Dorsolateral prefrontal cortex (tissue), 120 donors: ENCODE measurements at regions of chr5 and their contacts with region 1.

Region 1: DNA sequence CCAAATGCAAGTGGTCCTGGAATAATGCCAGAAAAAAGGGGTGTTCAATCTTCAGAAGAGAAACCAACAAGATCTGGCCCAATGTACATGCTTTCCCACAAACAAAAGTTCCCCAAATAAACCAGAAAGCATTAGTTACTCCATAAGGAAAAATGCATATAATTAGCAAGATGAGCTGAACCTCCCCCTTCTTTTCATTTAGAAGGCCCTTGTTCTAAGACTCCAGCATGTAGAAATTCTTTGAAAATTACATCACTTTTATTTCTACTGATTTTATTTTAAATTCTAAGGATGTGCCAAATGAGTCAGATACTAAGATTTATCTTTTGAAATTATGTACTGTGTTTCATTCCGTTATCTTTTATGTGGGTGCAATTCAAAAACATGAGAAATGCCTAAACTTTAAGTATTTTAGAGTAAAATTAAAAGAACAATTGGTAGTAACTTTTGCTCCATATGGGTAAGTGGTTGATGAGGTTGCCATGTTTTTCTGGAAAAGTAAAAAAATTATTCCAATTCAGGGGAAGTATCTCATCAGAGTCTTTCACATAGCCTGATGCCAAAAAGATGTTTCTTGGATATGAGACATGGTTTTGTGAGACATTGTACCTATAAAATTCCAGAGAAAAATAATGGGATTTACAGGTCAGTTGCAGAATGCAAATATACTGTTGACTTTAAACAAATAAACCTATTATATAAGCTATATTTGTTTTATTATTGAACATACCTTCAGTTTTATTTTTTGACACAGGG is 106.5 kb upstream of the CCDC112 start:
- DNase-seq: no peak
- H3K4me3 ChIP-seq: no peak overlapping the region
- H3K27ac ChIP-seq: no peak overlapping the region
- H3K27me3 ChIP-seq: no peaks in the 10 kb centered on the region
- CTCF ChIP-seq: no peak

Region 2: GRCh38 chr5:115432691-115433090 is 29.7 kb after region 1 on chr5:
- intact Hi-C with region 1: no loop called
- DNase-seq: no peak
- H3K4me3 ChIP-seq: no peak overlapping the region
- H3K27ac ChIP-seq: no peak overlapping the region
- H3K27me3 ChIP-seq: no peaks in the 10 kb centered on the region
- CTCF ChIP-seq: no peak

Region 3: GRCh38 chr5:115565233-115565632 is 162.2 kb after region 1 on chr5:
- intact Hi-C with region 1: loop called in 1 of 2 experiments (anchors 10 kb)
- DNase-seq: no peak
- H3K4me3 ChIP-seq: no peak overlapping the region
- H3K27ac ChIP-seq: no peak overlapping the region
- H3K27me3 ChIP-seq: no peaks in the 10 kb centered on the region
- CTCF ChIP-seq: no peak